ENCODE measurements at regions of chr17 and their contacts with region 1.

Region 1: DNA sequence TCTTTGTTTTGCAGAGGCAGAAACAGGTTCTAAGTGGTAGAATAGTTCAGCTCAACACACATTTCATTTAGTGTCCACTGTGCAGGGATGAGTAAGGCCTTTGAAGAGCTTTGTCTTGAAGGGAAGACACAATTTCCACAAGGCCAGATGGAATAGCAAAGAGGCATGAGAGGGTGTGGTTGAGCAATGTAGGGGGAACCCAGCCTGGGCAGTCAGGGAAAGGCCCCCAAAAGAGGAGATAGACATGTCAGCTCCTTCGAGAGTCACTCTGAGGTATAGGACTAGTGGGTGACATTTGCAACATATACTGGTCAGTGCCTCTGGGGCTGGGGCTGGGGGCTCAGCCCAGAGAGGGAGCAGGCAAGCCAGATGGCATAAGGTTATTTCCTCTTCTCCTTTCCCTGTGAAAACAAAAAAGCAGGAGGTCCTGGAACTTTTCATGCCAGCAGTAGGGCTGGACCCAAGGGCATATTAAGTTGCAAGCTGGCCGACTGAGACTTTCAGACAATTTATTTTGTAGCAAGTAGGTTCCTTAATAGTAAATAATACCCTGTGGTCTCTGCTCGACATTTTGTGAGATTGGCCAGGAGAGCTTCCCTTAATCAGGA is 7.1 kb downstream of the ALKBH5 start:
- DNase-seq: no peak
- H3K4me3 ChIP-seq: no peak overlapping the region
- H3K27ac ChIP-seq: peak overlapping the region; percentile 2
- H3K4me1 ChIP-seq: peaks cover 20% of the 10 kb centered on the region
- H3K27me3 ChIP-seq: no peaks in the 10 kb centered on the region
- CTCF ChIP-seq: no peak

Region 2: GRCh38 chr17:18087610-18088491 is 102.9 kb before region 1 on chr17 and contains the start of gene DRG2:
- CTCF ChIA-PET with region 1: no interaction called
- POLR2A ChIA-PET with region 1: interaction called, 10 read pairs
- intact Hi-C with region 1: no loop called
- DNase-seq: peak; percentile 93
- H3K4me3 ChIP-seq: peak within 1 kb of the TSS; percentile 71
- H3K27ac ChIP-seq: peak within 1 kb of the TSS; percentile 73
- H3K4me1 ChIP-seq: peaks cover 7% of the 10 kb centered on the region
- H3K27me3 ChIP-seq: no peaks in the 10 kb centered on the region
- CTCF ChIP-seq: 0 out of 2 replicates have a peak, but pooled peaks have one; percentile 15
- total RNA-seq, gene DRG2: 42.7 and 48.4 TPM in 2 replicates